GM12878 (cell line): ENCODE measurements at regions of chr6 and their contacts with region 1.

Region 1: DNA sequence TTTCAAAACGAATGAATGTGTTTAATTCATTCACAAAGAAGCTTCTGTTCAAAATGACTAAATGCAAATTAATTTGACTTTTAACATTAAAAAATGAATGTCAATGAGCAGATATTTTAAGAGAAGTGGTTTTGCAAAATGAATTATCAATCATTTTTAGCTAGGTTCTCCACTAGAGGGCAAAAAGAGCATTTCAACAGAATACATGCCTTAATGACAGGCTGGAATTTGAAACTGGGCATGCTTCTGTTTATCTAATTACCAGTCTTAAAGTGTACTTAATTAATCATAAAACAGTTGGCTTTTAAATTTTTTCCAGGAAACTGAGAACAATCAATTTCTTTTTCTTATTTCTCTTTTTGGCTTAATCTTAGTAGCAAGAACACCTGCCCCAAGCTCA is 63.8 kb upstream of the TINAG start:
- DNase-seq: no peak
- ATAC-seq: peak; percentile 66
- H3K4me3 ChIP-seq: no peak overlapping the region
- H3K27ac ChIP-seq: no peak overlapping the region
- H3K4me1 ChIP-seq: no peaks in the 10 kb centered on the region
- H3K27me3 ChIP-seq: no peaks in the 10 kb centered on the region
- CTCF ChIP-seq: peak; percentile 37 to 44 (median 40); a peak in 5 of 6 replicates
- EP300 ChIP-seq: no peak
- POLR2A ChIP-seq: no peak
- RAD21 ChIP-seq: peak; percentile 39

Region 2: GRCh38 chr6:53979468-53980067 is 264.9 kb before region 1 on chr6:
- CTCF ChIA-PET with region 1: no interaction called
- POLR2A ChIA-PET with region 1: no interaction called
- RAD21 ChIA-PET with region 1: no interaction called
- SMC1A ChIA-PET with region 1: no interaction called
- in situ Hi-C with region 1: no loop called
- intact Hi-C with region 1: no loop called
- DNase-seq: no peak
- ATAC-seq: no peak
- H3K4me3 ChIP-seq: no peak overlapping the region
- H3K27ac ChIP-seq: no peak overlapping the region
- H3K4me1 ChIP-seq: no peaks in the 10 kb centered on the region
- H3K27me3 ChIP-seq: no peaks in the 10 kb centered on the region
- CTCF ChIP-seq: peak; percentile 69 to 75 (median 70)
- EP300 ChIP-seq: no peak
- POLR2A ChIP-seq: no peak
- RAD21 ChIP-seq: peak; percentile 79

Region 3: GRCh38 chr6:54267798-54268197 is 23.4 kb after region 1 on chr6:
- CTCF ChIA-PET with region 1: interaction called, 14 read pairs
- POLR2A ChIA-PET with region 1: no interaction called
- RAD21 ChIA-PET with region 1: interaction called, 4 read pairs
- SMC1A ChIA-PET with region 1: interaction called, 5 read pairs
- in situ Hi-C with region 1: no loop called
- intact Hi-C with region 1: no loop called
- DNase-seq: no peak
- ATAC-seq: peak; percentile 69
- H3K4me3 ChIP-seq: no peak overlapping the region
- H3K27ac ChIP-seq: no peak overlapping the region
- H3K4me1 ChIP-seq: no peaks in the 10 kb centered on the region
- H3K27me3 ChIP-seq: no peaks in the 10 kb centered on the region
- CTCF ChIP-seq: peak; percentile 29 to 38 (median 30); a peak in 4 of 6 replicates
- EP300 ChIP-seq: no peak
- POLR2A ChIP-seq: no peak
- RAD21 ChIP-seq: peak; percentile 38; the same call in 1 of the 2 replicates

Region 4: GRCh38 chr6:54310377-54311152 is 66.1 kb after region 1 on chr6:
- CTCF ChIA-PET with region 1: interaction called, 12 read pairs
- POLR2A ChIA-PET with region 1: no interaction called
- RAD21 ChIA-PET with region 1: interaction called, 7 read pairs
- SMC1A ChIA-PET with region 1: interaction called, 8 read pairs
- in situ Hi-C with region 1: no loop called
- intact Hi-C with region 1: no loop called
- DNase-seq: no peak
- ATAC-seq: no peak
- H3K4me3 ChIP-seq: no peak overlapping the region
- H3K27ac ChIP-seq: no peak overlapping the region
- H3K4me1 ChIP-seq: no peaks in the 10 kb centered on the region
- H3K27me3 ChIP-seq: no peaks in the 10 kb centered on the region
- CTCF ChIP-seq: no peak
- EP300 ChIP-seq: no peak
- POLR2A ChIP-seq: no peak
- RAD21 ChIP-seq: no peak